Cardiac septum (tissue), 1 donor: ENCODE measurements at regions of chr13 and their contacts with region 1.

Region 1: DNA sequence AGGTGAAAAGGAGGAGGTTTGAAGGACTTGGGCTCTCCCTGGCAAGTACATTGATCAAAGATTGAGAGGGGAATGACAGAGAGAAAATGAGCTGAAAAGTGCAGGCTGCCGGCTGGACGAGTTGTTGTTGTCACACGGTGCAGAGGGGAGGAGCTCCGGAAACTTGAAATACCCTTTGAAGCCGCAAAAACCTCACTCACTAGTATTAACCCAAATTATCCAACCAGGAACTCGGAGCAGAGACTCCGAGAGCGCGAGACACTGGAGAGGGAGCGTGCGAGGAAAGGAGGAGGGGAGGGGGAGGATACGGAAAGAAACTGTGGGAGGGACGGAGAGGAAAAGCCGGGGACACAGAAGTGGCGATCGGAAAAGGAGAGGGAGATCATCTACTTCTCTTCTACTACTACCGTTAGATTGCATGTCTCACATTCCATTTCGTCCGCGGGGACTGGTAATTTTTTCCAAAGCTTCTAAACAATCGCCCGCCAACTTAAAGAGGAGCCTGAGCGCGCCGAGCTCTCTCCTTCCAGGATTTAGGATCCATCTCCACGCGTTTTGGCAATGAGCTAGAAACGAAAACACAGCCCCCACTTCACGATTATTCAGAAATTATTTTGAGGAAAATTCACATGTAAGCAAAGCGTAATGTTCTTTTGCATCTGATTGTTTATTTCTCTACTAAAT is at the start of gene DACH1:
- DNase-seq: no peak
- total RNA-seq, gene DACH1: 1.00 TPM

Region 2: GRCh38 chr13:71460211-71460610 is 407.1 kb before region 1 on chr13:
- intact Hi-C with region 1: loop called (anchors 10 kb)
- DNase-seq: no peak

Region 3: DNA sequence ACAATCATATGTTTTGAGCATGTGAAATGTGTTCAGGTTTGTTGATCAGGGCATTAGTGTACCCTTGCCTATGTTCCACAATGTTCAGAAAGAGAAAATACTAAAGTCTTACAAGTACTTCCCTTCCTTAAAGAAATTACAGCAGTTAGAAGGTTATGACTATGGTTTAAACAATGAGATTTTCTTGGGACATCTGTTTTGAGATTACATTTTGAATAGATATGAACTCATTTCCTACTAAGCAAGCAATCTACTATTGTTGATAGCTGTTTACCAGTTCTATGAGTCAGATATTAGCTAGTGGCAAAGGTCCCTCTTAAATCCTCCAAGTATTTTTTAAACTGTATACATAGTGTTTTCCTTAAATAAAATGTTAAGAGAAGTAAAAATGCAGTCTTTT is 241.6 kb before region 1 on chr13:
- intact Hi-C with region 1: loop called (anchors 5 kb)
- DNase-seq: no peak